B cell (primary cell): ENCODE measurements at regions of chr11 and their contacts with region 1.

Region 1: GRCh38 chr11:66408488-66409214 is 12.2 kb upstream of the NPAS4 start:
- DNase-seq: peak; percentile 93
- ATAC-seq: peak; percentile 96
- H3K4me3 ChIP-seq: peak overlapping the region in 4 of 5 experiments; percentile 5 to 57 (median 27)
- H3K4me3 Mint-ChIP-seq: peak overlapping the region; percentile 79
- H3K27ac ChIP-seq: no peak overlapping the region
- H3K27ac Mint-ChIP-seq: no peak overlapping the region
- H3K4me1 ChIP-seq: peaks cover 5 to 6% of the 10 kb centered on the region in 2 donors
- H3K4me1 Mint-ChIP-seq: peaks cover 4% of the 10 kb centered on the region
- H3K27me3 ChIP-seq: peaks cover 0 to 49% (median 12%) of the 10 kb centered on the region in 4 experiments
- H3K27me3 Mint-ChIP-seq: peaks cover 53% of the 10 kb centered on the region
- CTCF ChIP-seq: peak; percentile 100

Region 2: DNA sequence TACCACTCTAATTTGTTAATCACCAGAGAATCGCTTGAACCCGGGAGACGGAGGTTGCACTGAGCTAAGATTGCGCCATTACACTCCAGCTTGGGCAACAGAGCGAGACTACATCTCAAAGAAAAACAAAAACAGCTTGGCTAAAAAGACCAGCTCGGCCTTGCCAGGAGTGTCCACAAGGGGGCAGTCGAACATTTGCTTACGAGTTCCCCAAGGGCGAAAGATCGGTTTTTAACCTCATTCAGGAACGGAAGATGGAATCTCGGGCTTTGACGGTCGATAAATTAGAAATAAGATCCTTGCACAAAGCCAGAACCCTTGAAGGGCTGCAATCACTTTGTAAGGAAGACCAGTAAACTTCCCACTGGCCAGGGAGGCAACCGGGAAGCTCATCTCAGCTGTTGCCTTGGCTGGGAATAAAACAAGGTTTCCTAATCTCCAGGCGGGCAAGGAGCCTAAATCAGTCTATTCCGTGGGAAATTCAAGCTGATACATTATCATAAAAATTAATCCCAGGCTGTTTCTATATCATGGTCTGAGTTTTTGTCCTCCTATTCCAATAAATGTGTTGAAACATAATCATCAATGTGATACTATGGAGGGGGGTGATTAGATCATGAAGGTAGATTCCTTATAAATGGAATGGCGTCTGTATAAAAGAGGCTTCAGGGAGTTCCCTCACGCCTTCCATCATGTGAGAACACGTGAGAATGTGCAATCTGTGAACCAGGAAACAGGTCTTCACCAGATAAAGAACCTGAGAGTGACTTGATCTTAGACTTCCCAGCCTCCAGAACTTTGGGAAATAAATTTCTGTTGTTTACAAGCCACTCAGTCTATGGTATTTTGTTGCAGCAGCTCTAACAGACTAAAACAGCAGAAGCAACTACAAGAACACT is 22.2 kb before region 1 on chr11:
- CTCF ChIA-PET with region 1: interaction called, 21 read pairs
- POLR2A ChIA-PET with region 1: no interaction called
- intact Hi-C with region 1: no loop called
- DNase-seq: peak; percentile 88
- ATAC-seq: peak; percentile 85
- H3K4me3 ChIP-seq: peak overlapping the region in 2 of 5 experiments; percentile 11 to 34
- H3K4me3 Mint-ChIP-seq: peak overlapping the region; percentile 21
- H3K27ac ChIP-seq: no peak overlapping the region
- H3K27ac Mint-ChIP-seq: no peak overlapping the region
- H3K4me1 ChIP-seq: peaks cover 7 to 12% of the 10 kb centered on the region in 2 donors
- H3K4me1 Mint-ChIP-seq: peaks cover 10% of the 10 kb centered on the region
- H3K27me3 ChIP-seq: no peaks in the 10 kb centered on the region
- H3K27me3 Mint-ChIP-seq: no peaks in the 10 kb centered on the region
- CTCF ChIP-seq: peak; percentile 94

Region 3: DNA sequence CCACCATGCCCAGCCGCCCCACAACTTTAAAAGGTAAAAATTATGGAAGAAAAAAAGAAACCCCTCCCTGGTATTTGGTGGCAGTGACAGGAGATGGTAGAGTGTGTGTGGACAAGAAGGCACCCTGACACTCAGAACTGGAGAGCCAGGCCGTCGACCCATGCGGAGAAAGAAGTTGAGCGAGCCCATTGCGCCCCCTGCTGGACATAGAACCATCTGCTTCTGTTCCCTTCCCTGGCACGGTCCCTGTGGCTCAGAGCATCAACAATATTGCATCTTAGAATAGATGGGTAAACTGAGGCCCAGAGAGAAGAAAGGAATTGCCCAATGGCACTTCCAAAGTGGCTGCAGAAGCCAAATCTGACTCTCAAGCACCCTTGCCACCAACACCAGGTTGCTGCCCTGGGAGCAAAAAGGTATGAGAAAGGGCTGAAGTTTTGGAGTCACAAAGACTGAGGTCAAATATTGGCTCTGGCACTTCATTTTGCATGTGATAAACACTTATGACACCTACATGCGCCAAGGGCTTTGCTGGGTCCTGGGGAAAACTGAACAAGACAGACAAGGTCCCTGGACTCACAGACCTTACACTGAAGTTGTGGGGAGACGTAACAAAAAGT is 21.4 kb after region 1 on chr11:
- CTCF ChIA-PET with region 1: interaction called, 10 read pairs
- POLR2A ChIA-PET with region 1: no interaction called
- intact Hi-C with region 1: loop called (anchors 1 kb)
- DNase-seq: peak; percentile 71
- ATAC-seq: peak; percentile 65
- H3K4me3 ChIP-seq: no peak overlapping the region
- H3K4me3 Mint-ChIP-seq: no peak overlapping the region
- H3K27ac ChIP-seq: no peak overlapping the region
- H3K27ac Mint-ChIP-seq: no peak overlapping the region
- H3K4me1 ChIP-seq: no peaks in the 10 kb centered on the region
- H3K4me1 Mint-ChIP-seq: peaks cover 2% of the 10 kb centered on the region
- H3K27me3 ChIP-seq: peaks cover 0 to 10% (median 0%) of the 10 kb centered on the region in 4 experiments
- H3K27me3 Mint-ChIP-seq: peaks cover 4% of the 10 kb centered on the region
- CTCF ChIP-seq: peak; percentile 77

Region 4: GRCh38 chr11:66480117-66480938 is 71.7 kb after region 1 on chr11 and contains the start of gene DPP3:
- CTCF ChIA-PET with region 1: interaction called, 45 read pairs
- POLR2A ChIA-PET with region 1: no interaction called
- intact Hi-C with region 1: no loop called
- DNase-seq: peak; percentile 96
- ATAC-seq: peak; percentile 97
- H3K4me3 ChIP-seq: peak within 1 kb of the TSS; percentile 36 to 92 (median 71)
- H3K4me3 Mint-ChIP-seq: peak within 1 kb of the TSS; percentile 92
- H3K27ac ChIP-seq: peak within 1 kb of the TSS; percentile 63 to 85
- H3K27ac Mint-ChIP-seq: peak within 1 kb of the TSS; percentile 93
- H3K4me1 ChIP-seq: peaks cover 10 to 20% of the 10 kb centered on the region in 2 donors
- H3K4me1 Mint-ChIP-seq: peaks cover 20% of the 10 kb centered on the region
- H3K27me3 ChIP-seq: no peaks in the 10 kb centered on the region
- H3K27me3 Mint-ChIP-seq: no peaks in the 10 kb centered on the region
- CTCF ChIP-seq: no peak
- total RNA-seq, gene DPP3: 21.5 and 22.7 TPM in 2 replicates

Region 5: GRCh38 chr11:66638177-66639065 is 229.8 kb after region 1 on chr11 and contains the start of gene RBM4:
- CTCF ChIA-PET with region 1: no interaction called
- POLR2A ChIA-PET with region 1: no interaction called
- intact Hi-C with region 1: loop called (anchors 1 kb)
- DNase-seq: peak; percentile 99
- ATAC-seq: peak; percentile 92
- H3K4me3 ChIP-seq: peak within 1 kb of the TSS; percentile 79 to 95 (median 88)
- H3K4me3 Mint-ChIP-seq: peak within 1 kb of the TSS; percentile 99
- H3K27ac ChIP-seq: peak within 1 kb of the TSS; percentile 77 to 87
- H3K27ac Mint-ChIP-seq: peak within 1 kb of the TSS; percentile 96
- H3K4me1 ChIP-seq: peaks cover 49 to 54% of the 10 kb centered on the region in 2 donors
- H3K4me1 Mint-ChIP-seq: peaks cover 63% of the 10 kb centered on the region
- H3K27me3 ChIP-seq: no peaks in the 10 kb centered on the region
- H3K27me3 Mint-ChIP-seq: no peaks in the 10 kb centered on the region
- CTCF ChIP-seq: peak; percentile 10
- total RNA-seq, gene RBM4: 199 and 203 TPM in 2 replicates

Region 6: DNA sequence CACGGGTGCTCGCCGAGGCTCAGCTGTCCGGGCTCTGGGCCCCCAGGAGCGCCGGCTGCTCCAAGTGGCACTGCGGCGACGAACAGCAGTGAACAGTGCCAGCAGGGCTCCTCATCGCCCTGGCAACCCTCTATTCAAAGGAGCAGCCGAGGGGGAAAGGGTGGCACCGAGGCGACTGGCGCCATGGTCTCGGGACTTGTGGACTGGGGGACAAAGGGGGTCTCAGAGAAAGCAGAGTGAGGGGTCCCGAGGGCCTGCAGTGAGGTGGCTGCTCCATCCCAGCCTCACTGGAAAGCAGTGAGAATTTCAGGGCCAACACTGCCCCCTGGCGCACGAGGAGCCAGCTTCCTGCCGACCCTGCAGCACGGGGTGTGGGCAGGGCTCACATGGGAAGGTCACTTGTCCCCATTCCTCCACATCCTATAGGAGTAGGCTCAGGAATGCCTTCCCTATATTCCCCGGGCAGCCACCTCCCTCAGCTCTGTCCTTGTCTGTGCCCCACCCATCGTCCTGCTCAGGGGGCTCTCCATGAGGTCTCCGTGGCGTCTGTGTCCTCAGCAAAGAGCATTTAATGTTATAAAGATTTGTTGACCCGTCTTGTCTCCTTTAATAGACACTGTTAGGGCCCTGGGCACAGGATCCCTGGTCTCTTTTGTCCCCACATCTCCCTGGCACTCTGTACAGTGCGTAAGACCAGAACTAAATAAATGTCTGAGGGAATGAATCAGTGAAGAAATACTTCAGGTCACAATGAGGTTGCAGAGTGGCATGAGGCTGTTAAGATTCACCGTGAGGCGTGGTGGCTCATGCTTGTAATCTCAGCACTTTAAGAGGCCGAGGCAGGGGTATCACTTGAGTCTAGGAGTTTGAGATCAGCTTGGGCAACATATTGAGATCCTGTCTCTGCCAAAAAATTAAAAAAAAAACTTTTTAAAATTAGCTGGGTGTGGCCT is 474.6 kb after region 1 on chr11:
- CTCF ChIA-PET with region 1: interaction called, 3 read pairs
- POLR2A ChIA-PET with region 1: no interaction called
- intact Hi-C with region 1: loop called (anchors 1 kb)
- DNase-seq: peak; percentile 67
- ATAC-seq: peak; percentile 43
- H3K4me3 ChIP-seq: no peak overlapping the region
- H3K4me3 Mint-ChIP-seq: no peak overlapping the region
- H3K27ac ChIP-seq: no peak overlapping the region
- H3K27ac Mint-ChIP-seq: no peak overlapping the region
- H3K4me1 ChIP-seq: no peaks in the 10 kb centered on the region
- H3K4me1 Mint-ChIP-seq: no peaks in the 10 kb centered on the region
- H3K27me3 ChIP-seq: peaks cover 0 to 5% (median 0%) of the 10 kb centered on the region in 4 experiments
- H3K27me3 Mint-ChIP-seq: peaks cover 13% of the 10 kb centered on the region
- CTCF ChIP-seq: peak; percentile 75

Region 7: GRCh38 chr11:66920978-66921784 is 512.5 kb after region 1 on chr11:
- CTCF ChIA-PET with region 1: no interaction called
- POLR2A ChIA-PET with region 1: no interaction called
- intact Hi-C with region 1: no loop called
- DNase-seq: no peak
- ATAC-seq: no peak
- H3K4me3 ChIP-seq: no peak overlapping the region
- H3K4me3 Mint-ChIP-seq: no peak overlapping the region
- H3K27ac ChIP-seq: no peak overlapping the region
- H3K27ac Mint-ChIP-seq: no peak overlapping the region
- H3K4me1 ChIP-seq: no peaks in the 10 kb centered on the region
- H3K4me1 Mint-ChIP-seq: no peaks in the 10 kb centered on the region
- H3K27me3 ChIP-seq: peaks cover 0 to 4% (median 0%) of the 10 kb centered on the region in 4 experiments
- H3K27me3 Mint-ChIP-seq: peaks cover 12% of the 10 kb centered on the region
- CTCF ChIP-seq: no peak